ENCODE measurements at regions of chr7 and their contacts with region 1.

Region 1: GRCh38 chr7:6435486-6436384 is 12.0 kb downstream of the DAGLB start:
- DNase-seq: peak; percentile 81
- H3K4me3 Mint-ChIP-seq: peak overlapping the region; percentile 69
- H3K27ac Mint-ChIP-seq: peak overlapping the region; percentile 79
- H3K4me1 Mint-ChIP-seq: peaks cover 27% of the 10 kb centered on the region
- H3K27me3 Mint-ChIP-seq: no peaks in the 10 kb centered on the region

Region 2: DNA sequence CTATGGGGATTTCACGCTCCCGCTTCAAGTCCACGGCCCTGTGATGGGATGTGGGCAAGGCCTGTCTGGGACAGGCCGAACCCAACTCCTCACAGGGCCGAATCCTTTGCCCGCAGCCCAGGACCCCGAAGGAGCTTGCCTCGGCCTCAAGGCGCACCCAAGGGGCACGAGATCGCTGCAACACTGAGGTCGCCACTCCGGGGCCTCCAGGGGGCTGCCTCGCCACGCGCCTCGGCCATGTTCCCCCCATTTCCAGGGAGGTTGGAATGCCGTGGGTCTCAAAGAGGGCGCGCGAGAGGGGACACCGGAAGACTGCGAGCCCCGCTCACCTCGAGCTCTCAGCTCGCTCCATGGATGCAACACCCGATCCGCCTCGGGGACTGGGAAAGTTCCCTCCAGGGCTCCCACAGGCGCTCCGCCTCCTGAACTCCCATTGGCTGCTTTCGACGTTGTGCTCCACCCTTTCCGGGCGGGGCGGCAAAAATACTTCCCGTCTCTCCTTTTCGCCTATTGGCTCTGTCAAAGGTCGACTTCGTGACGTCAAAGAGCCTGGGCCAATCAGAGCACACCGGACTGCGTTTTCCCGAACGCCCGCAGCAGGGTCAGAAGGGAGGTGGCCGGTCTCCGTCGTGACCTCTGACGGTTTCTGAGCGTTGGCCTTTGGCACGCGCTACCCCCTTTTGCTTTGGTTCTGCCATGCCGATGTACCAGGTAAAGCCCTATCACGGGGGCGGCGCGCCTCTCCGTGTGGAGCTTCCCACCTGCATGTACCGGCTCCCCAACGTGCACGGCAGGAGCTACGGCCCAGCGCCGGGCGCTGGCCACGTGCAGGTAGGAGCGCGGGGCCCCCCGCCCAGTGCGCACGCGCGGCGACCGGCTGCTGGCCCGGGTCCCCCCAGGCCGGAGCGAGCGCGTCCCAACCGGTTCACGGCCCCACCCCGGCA is 426.8 kb before region 1 on chr7 and contains the starts of genes AIMP2 and PMS2:
- intact Hi-C with region 1: loop called (anchors 10 kb)
- DNase-seq: peak; percentile 97
- H3K4me3 Mint-ChIP-seq: peak within 1 kb of the TSS; percentile 87
- H3K27ac Mint-ChIP-seq: peak within 1 kb of the TSS; percentile 91
- H3K4me1 Mint-ChIP-seq: peaks cover 28% of the 10 kb centered on the region
- H3K27me3 Mint-ChIP-seq: no peaks in the 10 kb centered on the region
- total RNA-seq, gene AIMP2: 73.4 and 82.9 TPM in 2 replicates
- total RNA-seq, gene PMS2: 21.2 and 21.5 TPM in 2 replicates

Region 3: GRCh38 chr7:6385110-6385971 is 50.4 kb before region 1 on chr7:
- intact Hi-C with region 1: loop called (anchors 5 kb)
- DNase-seq: no peak
- H3K4me3 Mint-ChIP-seq: no peak overlapping the region
- H3K27ac Mint-ChIP-seq: no peak overlapping the region
- H3K4me1 Mint-ChIP-seq: peaks cover 40% of the 10 kb centered on the region
- H3K27me3 Mint-ChIP-seq: no peaks in the 10 kb centered on the region

Region 4: DNA sequence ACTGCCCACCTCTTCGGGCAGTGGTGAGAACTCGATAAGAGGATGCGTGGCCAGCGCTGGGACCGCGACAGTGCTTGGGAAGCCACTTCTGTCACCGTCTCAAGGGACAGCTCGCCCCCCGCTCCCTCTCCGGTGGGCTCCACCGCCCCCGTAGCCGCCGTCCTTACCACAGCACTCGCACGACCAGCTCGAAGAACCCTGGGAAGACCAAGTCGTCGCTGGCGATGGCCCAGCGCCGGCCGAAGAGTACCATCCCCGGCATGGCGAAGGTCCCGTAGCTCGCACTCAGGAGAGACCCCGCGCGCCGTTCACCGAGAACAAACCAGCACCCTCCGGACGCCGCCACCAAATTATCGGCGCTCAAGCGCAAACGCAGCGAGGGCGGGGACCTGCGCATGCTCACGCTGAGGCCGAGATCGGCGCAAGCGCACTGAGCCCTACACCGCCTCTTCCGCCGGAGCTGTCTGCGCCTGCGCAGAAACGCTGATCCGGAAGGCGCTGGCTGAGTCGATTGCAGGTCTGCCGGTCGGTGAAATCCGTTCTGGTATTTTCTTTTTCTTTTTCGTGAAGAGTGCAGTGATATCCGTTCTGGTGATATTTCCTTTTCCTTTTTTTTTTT is 12.0 kb after region 1 on chr7 and contains the start of gene DAGLB:
- intact Hi-C with region 1: loop called (anchors 1 kb)
- DNase-seq: peak; percentile 96
- H3K4me3 Mint-ChIP-seq: peak within 1 kb of the TSS; percentile 92
- H3K27ac Mint-ChIP-seq: peak within 1 kb of the TSS; percentile 90
- H3K4me1 Mint-ChIP-seq: peaks cover 20% of the 10 kb centered on the region
- H3K27me3 Mint-ChIP-seq: no peaks in the 10 kb centered on the region
- total RNA-seq, gene DAGLB: 21.8 and 22.3 TPM in 2 replicates

Region 5: DNA sequence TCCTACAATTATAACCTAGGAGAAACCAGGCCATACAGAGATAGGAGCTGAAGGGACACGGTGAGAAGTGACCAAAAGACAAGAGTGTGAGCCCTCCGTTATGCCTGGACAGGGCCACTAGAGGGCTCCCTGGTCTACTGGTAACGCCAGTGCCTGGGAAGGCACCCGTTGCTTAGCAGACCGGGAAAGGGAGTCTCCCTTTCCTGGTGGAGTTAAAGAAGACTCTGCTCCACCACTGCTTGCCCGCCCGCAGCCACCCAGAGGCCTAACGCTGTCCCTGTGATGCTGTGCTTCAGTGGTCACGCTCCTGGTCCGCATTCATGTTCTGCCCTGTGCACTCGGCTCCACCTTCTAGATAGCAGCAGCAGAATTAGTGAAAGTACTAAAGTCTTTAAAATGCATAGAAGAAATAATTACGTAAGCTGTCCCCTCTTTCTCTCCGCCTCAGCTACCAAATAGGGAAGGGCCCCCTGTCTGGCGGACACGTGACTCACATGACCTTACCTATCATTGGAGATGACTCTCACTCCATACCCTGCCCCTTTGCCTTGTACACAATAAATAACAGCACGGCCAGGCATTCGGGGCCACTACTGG is 80.8 kb after region 1 on chr7:
- intact Hi-C with region 1: no loop called
- DNase-seq: peak; percentile 49
- H3K4me3 Mint-ChIP-seq: peak overlapping the region; percentile 74
- H3K27ac Mint-ChIP-seq: no peak overlapping the region
- H3K4me1 Mint-ChIP-seq: peaks cover 8% of the 10 kb centered on the region
- H3K27me3 Mint-ChIP-seq: peaks cover 2% of the 10 kb centered on the region

Measured in activated T-helper 2 cell treated with anti-CD3 and anti-CD28 coated beads, Interferon-gamma antibody, Interleukin-2, Interleukin-4, amounts not matched to agents 10 μg/mL and 5 μg/mL and 100 μg/mL, durations not matched to agents 14 hours and 24 hours and 36 hours (primary cell).